Activated T-helper 1 cell treated with anti-CD3 and anti-CD28 coated beads, Interleukin-12 subunit alpha, Interleukin-12 subunit beta, Interleukin-2, Interleukin-4 antibody, amounts not matched to agents 30 ng/mL and 10 ng/mL and 1 ng/mL, durations not matched to agents 14 hours and 24 hours and 36 hours (primary cell): ENCODE measurements at regions of chr10 and their contacts with region 1.

Region 1: DNA sequence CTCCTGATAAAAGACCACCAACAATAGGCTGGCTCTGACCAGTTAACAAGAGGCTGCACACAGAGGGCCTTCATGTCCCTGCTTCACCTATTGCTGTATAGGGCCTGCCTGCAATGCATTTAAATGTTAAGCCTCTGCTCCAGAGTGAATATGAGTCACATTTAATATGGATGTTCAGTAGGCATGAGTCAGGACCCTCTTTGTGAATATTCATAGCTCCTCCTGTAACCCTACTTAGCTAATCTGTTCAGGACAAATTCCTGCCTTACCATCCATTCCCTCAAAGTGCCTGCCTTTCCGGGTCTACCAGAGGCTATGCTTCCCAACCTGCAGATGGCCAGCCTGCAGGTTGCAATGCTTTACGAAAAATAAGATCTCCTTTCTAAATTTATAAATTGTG is 32.5 kb downstream of the ARHGAP22 start:
- DNase-seq: no peak
- H3K4me3 Mint-ChIP-seq: no peak overlapping the region
- H3K27ac Mint-ChIP-seq: no peak overlapping the region
- H3K4me1 Mint-ChIP-seq: no peaks in the 10 kb centered on the region
- H3K27me3 Mint-ChIP-seq: peaks cover 16% of the 10 kb centered on the region

Region 2: GRCh38 chr10:49784681-49785080 is 1212.3 kb after region 1 on chr10:
- intact Hi-C with region 1: loop called (anchors 5 kb)
- DNase-seq: no peak
- H3K4me3 Mint-ChIP-seq: no peak overlapping the region
- H3K27ac Mint-ChIP-seq: no peak overlapping the region
- H3K4me1 Mint-ChIP-seq: no peaks in the 10 kb centered on the region
- H3K27me3 Mint-ChIP-seq: peaks cover 3% of the 10 kb centered on the region